ENCODE measurements at regions of chr13 and their contacts with region 1.

Region 1: DNA sequence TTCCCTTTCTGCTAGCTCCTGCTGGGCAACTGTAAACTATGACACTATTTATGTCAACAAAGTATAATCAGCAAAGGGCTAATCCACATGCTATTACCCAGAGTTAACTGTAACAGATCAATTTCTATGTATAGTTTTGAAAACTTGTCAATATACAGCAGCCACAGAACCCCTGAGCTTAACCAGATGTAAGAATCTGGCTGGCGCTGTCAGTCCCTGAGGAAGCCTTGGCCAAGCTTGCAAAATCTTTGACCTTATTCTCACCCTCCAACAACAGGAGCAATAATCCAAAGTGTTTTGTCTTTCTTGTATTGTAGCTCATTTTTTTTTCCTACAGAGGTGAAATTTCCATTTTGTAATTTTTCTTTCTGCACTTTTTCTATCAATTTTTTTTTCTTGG is 1230.1 kb upstream of the SLC10A2 start:
- DNase-seq: no peak
- H3K4me3 ChIP-seq: no peak overlapping the region
- H3K27ac ChIP-seq: no peak overlapping the region
- H3K4me1 ChIP-seq: no peaks in the 10 kb centered on the region
- H3K27me3 ChIP-seq: no peaks in the 10 kb centered on the region
- CTCF ChIP-seq: no peak
- EP300 ChIP-seq: no peak
- POLR2A ChIP-seq: no peak

Region 2: DNA sequence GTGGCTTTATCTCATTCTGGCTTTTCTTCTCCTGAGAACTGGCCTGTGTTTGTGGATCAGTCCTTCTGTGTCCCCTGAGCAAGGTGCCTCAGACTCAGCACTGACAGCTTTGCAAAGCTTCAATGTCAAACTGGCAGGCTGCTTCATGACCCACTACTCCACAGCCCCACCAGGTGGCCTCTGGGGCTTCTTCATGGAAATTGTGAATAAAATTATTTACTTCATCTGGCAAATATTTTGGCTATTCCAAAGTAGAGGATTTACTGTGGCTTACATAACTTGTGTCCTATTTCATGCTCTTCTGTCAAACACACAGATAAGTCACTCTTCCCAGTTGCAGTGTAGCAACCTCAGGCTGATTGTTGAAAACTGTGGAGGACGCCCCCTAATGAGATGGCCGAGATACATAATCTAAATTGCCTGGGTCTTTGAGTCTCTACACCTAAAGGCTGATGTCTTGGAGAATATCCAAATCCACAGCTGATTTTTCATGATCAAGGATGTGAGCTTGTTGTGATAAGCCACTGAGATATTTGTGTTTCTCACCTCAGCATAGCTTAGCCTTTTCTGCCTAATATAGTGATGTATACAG is 508.1 kb before region 1 on chr13:
- intact Hi-C with region 1: loop called (anchors 5 kb)
- DNase-seq: no peak
- H3K4me3 ChIP-seq: no peak overlapping the region
- H3K27ac ChIP-seq: no peak overlapping the region
- H3K4me1 ChIP-seq: no peaks in the 10 kb centered on the region
- H3K27me3 ChIP-seq: no peaks in the 10 kb centered on the region
- CTCF ChIP-seq: no peak
- EP300 ChIP-seq: no peak
- POLR2A ChIP-seq: no peak

Measured in esophagus muscularis mucosa (tissue), 4 donors.